ENCODE measurements at regions of chr20 and their contacts with region 1.

Region 1: DNA sequence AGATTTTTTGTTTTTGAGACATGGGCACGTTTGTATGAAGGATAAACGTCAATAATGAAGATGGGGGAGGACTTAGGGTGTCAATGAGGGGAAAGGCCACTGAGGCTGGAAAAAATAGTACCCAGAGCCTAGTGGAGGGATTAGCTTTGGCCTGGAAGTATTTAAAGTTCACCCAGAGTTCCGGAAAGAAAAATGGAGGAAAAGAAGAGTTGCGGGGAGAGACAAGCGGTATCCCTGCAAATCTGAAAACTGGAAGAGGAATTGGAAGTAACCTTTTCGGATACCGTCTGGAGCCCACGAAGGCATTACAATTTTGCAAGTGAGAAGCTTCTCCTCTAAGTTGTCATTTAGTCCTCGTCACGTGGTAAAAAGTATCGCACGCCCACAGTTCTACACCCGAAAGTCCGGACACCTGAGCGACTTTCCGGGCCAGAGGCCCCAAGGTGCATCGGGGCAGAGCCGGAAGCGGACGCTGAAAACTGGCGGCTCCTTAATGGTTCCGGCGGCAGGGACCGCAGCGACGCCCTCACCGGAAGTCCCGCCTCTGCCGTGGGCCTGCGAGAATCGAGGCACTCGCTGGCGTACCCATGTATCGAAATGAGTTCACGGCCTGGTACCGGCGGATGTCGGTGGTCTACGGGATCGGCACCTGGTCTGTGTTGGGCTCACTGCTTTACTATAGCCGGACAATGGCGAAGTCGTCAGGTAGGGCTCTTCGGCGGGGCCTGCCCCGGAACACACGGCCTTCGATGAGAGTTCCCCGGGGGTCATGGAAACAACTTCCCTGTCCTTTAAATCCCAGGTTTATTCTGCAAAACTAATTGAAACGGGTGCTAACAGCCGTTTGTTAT is at the start of gene SMIM26:
- DNase-seq: peak; percentile 88
- ATAC-seq: peak; percentile 98
- H3K4me3 Mint-ChIP-seq: peak within 1 kb of the TSS; percentile 90
- H3K27ac Mint-ChIP-seq: peak within 1 kb of the TSS; percentile 95
- H3K4me1 Mint-ChIP-seq: peaks cover 6% of the 10 kb centered on the region; the same call in 1 of the 2 replicates
- H3K27me3 Mint-ChIP-seq: no peaks in the 10 kb centered on the region
- CTCF ChIP-seq: no peak
- total RNA-seq, gene SMIM26: 71.9 to 78.1 TPM (median 77.4 TPM) in 3 replicates

Region 2: DNA sequence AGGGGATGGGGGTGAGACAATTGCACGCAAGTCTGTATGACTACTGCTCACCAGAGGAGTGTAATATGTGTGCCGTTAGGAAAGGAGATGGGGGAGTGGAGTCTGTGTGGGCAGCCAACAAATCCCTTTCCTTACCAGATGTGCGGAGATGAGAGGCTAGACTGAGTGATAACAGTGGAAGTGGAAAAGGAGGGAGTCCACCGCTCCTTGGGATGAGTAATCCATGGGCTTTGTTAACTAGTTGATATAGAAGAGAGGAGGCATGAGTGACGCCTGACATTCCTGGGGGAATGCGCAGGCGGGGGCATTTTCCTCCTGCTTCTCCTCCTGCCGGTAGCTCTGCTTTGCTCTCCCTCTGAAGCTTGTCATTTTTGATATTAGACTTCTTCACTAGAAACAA is 13.4 kb before region 1 on chr20:
- CTCF ChIA-PET with region 1: no interaction called
- POLR2A ChIA-PET with region 1: interaction called, 10 read pairs
- DNase-seq: no peak
- ATAC-seq: no peak
- H3K4me3 Mint-ChIP-seq: no peak overlapping the region
- H3K27ac Mint-ChIP-seq: no peak overlapping the region
- H3K4me1 Mint-ChIP-seq: no peaks in the 10 kb centered on the region
- H3K27me3 Mint-ChIP-seq: no peaks in the 10 kb centered on the region
- CTCF ChIP-seq: no peak

Region 3: GRCh38 chr20:18609741-18610140 is 42.6 kb after region 1 on chr20:
- CTCF ChIA-PET with region 1: no interaction called
- POLR2A ChIA-PET with region 1: no interaction called
- DNase-seq: no peak
- ATAC-seq: no peak
- H3K4me3 Mint-ChIP-seq: no peak overlapping the region
- H3K27ac Mint-ChIP-seq: no peak overlapping the region
- H3K4me1 Mint-ChIP-seq: peaks cover 13% of the 10 kb centered on the region
- H3K27me3 Mint-ChIP-seq: no peaks in the 10 kb centered on the region
- CTCF ChIP-seq: no peak